Activated T-helper 2 cell treated with anti-CD3 and anti-CD28 coated beads, Interferon-gamma antibody, Interleukin-2, Interleukin-4, amounts not matched to agents 10 μg/mL and 5 μg/mL and 100 μg/mL, durations not matched to agents 14 hours and 24 hours and 36 hours (primary cell): ENCODE measurements at regions of chr2 and their contacts with region 1.

Region 1: GRCh38 chr2:99337113-99338028 is at the start of gene EIF5B:
- DNase-seq: peak; percentile 89
- H3K4me3 Mint-ChIP-seq: no peak within 1 kb of the TSS
- H3K27ac Mint-ChIP-seq: no peak within 1 kb of the TSS
- H3K4me1 Mint-ChIP-seq: peaks cover 30% of the 10 kb centered on the region
- H3K27me3 Mint-ChIP-seq: no peaks in the 10 kb centered on the region
- total RNA-seq, gene EIF5B: 76.3 and 81.0 TPM in 2 replicates

Region 2: GRCh38 chr2:98614024-98614739 is 723.2 kb before region 1 on chr2:
- intact Hi-C with region 1: loop called (anchors 5 kb)
- DNase-seq: no peak
- H3K4me3 Mint-ChIP-seq: no peak overlapping the region
- H3K27ac Mint-ChIP-seq: peak overlapping the region; percentile 5
- H3K4me1 Mint-ChIP-seq: peaks cover 52% of the 10 kb centered on the region
- H3K27me3 Mint-ChIP-seq: no peaks in the 10 kb centered on the region

Region 3: DNA sequence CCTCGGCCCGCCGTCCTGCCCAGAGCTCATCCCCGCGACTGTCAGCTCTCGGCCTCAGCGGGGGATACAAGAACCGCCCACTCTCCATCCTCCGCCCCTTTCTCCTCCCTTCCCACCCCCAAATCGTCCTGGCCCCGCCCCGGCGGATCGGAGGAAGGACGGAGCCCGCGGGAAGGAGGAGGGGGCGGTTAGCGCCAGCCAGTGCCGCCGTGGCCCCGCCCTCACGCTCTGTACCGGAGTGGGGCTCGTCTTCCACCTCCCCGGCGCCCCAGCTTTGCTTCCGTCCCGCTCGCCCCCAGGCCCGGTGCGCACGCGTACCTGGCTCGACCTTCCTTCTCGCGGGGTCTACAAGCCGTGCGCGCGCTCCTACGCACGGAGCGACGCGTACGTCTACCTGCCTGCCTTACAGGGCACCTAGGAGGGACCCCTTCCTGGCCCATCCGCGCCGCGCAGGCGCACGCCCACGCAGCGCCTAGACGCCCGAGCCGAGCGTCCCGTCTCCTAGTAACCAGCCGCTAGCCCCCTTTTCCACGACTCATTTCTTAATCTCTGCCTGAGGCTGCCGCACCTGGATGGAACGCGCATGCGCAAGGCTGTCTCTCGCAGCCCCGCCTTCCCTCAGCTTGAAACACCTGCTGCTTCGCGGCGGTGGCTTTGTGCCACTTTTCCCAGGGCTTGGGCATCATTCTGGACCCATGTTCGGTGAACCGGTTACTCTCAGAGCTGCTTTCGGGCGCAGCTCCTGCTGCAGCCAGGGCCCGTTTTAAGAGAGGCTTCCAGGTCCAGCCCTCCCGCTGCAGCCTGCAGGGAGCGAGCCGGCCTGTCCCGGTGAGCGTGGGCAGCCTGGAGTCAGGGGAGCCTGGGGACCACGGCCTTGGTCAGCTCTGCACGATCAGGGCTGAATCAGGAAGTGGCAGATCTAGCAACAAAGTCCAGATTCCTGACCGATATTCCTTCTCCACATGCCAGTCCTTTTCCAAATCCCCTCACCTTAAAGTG is 196.0 kb before region 1 on chr2 and contains the start of gene C2orf15:
- intact Hi-C with region 1: loop called (anchors 1 kb)
- DNase-seq: peak; percentile 91
- H3K4me3 Mint-ChIP-seq: peak within 1 kb of the TSS; percentile 83
- H3K27ac Mint-ChIP-seq: peak within 1 kb of the TSS; percentile 65
- H3K4me1 Mint-ChIP-seq: peaks cover 8% of the 10 kb centered on the region
- H3K27me3 Mint-ChIP-seq: peaks cover 24% of the 10 kb centered on the region
- total RNA-seq, gene C2orf15: 0.16 TPM in 1 of 2 replicates, not detected in the other

Region 4: GRCh38 chr2:99180755-99181623 is 156.4 kb before region 1 on chr2 and contains the starts of genes MITD1 and MRPL30:
- intact Hi-C with region 1: loop called (anchors 1 kb)
- DNase-seq: peak; percentile 88
- H3K4me3 Mint-ChIP-seq: peak within 1 kb of the TSS; percentile 96
- H3K27ac Mint-ChIP-seq: peak within 1 kb of the TSS; percentile 91
- H3K4me1 Mint-ChIP-seq: peaks cover 34% of the 10 kb centered on the region
- H3K27me3 Mint-ChIP-seq: no peaks in the 10 kb centered on the region
- total RNA-seq, gene MITD1: 49.7 and 52.4 TPM in 2 replicates
- total RNA-seq, gene MRPL30: 27.6 and 29.4 TPM in 2 replicates

Region 5: GRCh38 chr2:99489761-99490622 is 152.6 kb after region 1 on chr2 and contains the start of gene REV1:
- intact Hi-C with region 1: loop called (anchors 1 kb)
- DNase-seq: peak; percentile 89
- H3K4me3 Mint-ChIP-seq: peak within 1 kb of the TSS; percentile 100
- H3K27ac Mint-ChIP-seq: peak within 1 kb of the TSS; percentile 97
- H3K4me1 Mint-ChIP-seq: peaks cover 31% of the 10 kb centered on the region
- H3K27me3 Mint-ChIP-seq: peaks cover 2% of the 10 kb centered on the region
- total RNA-seq, gene REV1: 39.4 and 41.3 TPM in 2 replicates

Region 6: GRCh38 chr2:100562732-100563720 is 1225.7 kb after region 1 on chr2 and contains the start of gene PDCL3:
- intact Hi-C with region 1: loop called (anchors 2 kb)
- DNase-seq: peak; percentile 94
- H3K4me3 Mint-ChIP-seq: peak within 1 kb of the TSS; percentile 88
- H3K27ac Mint-ChIP-seq: peak within 1 kb of the TSS; percentile 99
- H3K4me1 Mint-ChIP-seq: peaks cover 36% of the 10 kb centered on the region
- H3K27me3 Mint-ChIP-seq: no peaks in the 10 kb centered on the region
- total RNA-seq, gene PDCL3: 42.5 and 48.8 TPM in 2 replicates